CD4-positive, alpha-beta memory T cell (primary cell): ENCODE measurements at regions of chr3 and their contacts with region 1.

Region 1: GRCh38 chr3:184543843-184544512 is 17.6 kb upstream of the EPHB3 start:
- DNase-seq: peak; percentile 75 to 81 (median 78)
- H3K4me3 ChIP-seq: no peak overlapping the region
- H3K4me3 Mint-ChIP-seq: peak overlapping the region in 6 of 8 donors; percentile 40 to 64 (median 56)
- H3K27ac ChIP-seq: no peak overlapping the region
- H3K27ac Mint-ChIP-seq: peak overlapping the region in 1 of 7 donors; percentile 65
- H3K4me1 ChIP-seq: peaks cover 12% of the 10 kb centered on the region
- H3K4me1 Mint-ChIP-seq: peaks cover 9 to 13% (median 12%) of the 10 kb centered on the region in 4 donors
- H3K27me3 ChIP-seq: peaks cover 5% of the 10 kb centered on the region
- H3K27me3 Mint-ChIP-seq: peaks cover 11 to 23% of the 10 kb centered on the region in 2 donors

Region 2: GRCh38 chr3:183895296-183895695 is 648.7 kb before region 1 on chr3:
- CTCF ChIA-PET with region 1: interaction called, 4 read pairs
- POLR2A ChIA-PET with region 1: no interaction called
- intact Hi-C with region 1: loop called (anchors 1 kb)
- DNase-seq: peak; percentile 48 to 60 (median 57)
- H3K4me3 ChIP-seq: no peak overlapping the region
- H3K4me3 Mint-ChIP-seq: no peak overlapping the region
- H3K27ac ChIP-seq: no peak overlapping the region
- H3K27ac Mint-ChIP-seq: no peak overlapping the region
- H3K4me1 ChIP-seq: no peaks in the 10 kb centered on the region
- H3K4me1 Mint-ChIP-seq: peaks cover 0 to 3% (median 1%) of the 10 kb centered on the region in 4 donors
- H3K27me3 ChIP-seq: no peaks in the 10 kb centered on the region
- H3K27me3 Mint-ChIP-seq: peaks cover 17 to 37% of the 10 kb centered on the region in 2 donors

Region 3: GRCh38 chr3:184354121-184354728 is 189.8 kb before region 1 on chr3:
- CTCF ChIA-PET with region 1: interaction called, 21 read pairs
- POLR2A ChIA-PET with region 1: no interaction called
- intact Hi-C with region 1: loop called (anchors 1 kb)
- DNase-seq: peak in 4 of 5 donors; percentile 39 to 55 (median 43)
- H3K4me3 ChIP-seq: no peak overlapping the region
- H3K4me3 Mint-ChIP-seq: peak overlapping the region in 1 of 8 donors; percentile 15
- H3K27ac ChIP-seq: no peak overlapping the region
- H3K27ac Mint-ChIP-seq: no peak overlapping the region
- H3K4me1 ChIP-seq: peaks cover 10% of the 10 kb centered on the region
- H3K4me1 Mint-ChIP-seq: peaks cover 0 to 5% (median 0%) of the 10 kb centered on the region in 4 donors
- H3K27me3 ChIP-seq: no peaks in the 10 kb centered on the region
- H3K27me3 Mint-ChIP-seq: no peaks in the 10 kb centered on the region

Region 4: DNA sequence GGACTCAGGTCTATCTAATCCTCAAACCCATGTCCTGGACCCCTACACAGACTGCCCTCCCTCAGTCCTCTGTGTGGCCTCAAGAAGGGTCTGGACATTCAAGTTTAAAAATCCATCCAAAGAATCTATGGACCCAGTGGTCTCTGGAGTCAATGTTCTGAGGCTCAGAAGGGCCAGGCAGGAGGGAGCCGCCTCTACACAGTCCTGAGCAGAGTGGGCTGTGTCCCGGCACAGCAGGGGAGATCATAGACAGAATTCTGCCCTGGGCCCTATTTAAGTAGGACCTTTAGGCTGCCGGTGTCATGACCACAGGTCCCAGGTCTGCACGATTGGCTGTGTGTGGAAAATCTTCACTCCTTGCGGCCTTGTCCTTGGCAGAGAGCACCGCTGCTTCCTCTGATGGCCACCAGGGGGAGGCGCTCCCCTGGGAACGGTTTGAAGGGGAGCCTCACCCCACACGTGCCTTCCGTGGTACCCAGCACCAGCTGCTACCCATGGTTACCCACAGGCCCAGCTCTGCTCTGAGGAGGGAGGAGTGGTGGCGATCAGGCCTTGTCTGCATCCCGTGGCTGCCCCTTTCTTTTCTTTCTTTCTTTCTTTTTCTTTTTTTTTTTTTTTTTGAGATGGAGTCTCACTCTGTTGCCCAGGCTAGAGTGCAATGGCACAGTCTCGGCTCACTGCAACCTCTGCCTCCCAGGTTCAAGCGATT is 126.2 kb before region 1 on chr3:
- CTCF ChIA-PET with region 1: interaction called, 47 read pairs
- POLR2A ChIA-PET with region 1: interaction called, 4 read pairs
- intact Hi-C with region 1: loop called (anchors 1 kb)
- DNase-seq: peak; percentile 60 to 67 (median 61)
- H3K4me3 ChIP-seq: no peak overlapping the region
- H3K4me3 Mint-ChIP-seq: peak overlapping the region in 1 of 8 donors; percentile 20
- H3K27ac ChIP-seq: no peak overlapping the region
- H3K27ac Mint-ChIP-seq: no peak overlapping the region
- H3K4me1 ChIP-seq: no peaks in the 10 kb centered on the region
- H3K4me1 Mint-ChIP-seq: peaks cover 0 to 2% (median 0%) of the 10 kb centered on the region in 4 donors
- H3K27me3 ChIP-seq: no peaks in the 10 kb centered on the region
- H3K27me3 Mint-ChIP-seq: peaks cover 0 to under 1% of the 10 kb centered on the region in 2 donors

Region 5: DNA sequence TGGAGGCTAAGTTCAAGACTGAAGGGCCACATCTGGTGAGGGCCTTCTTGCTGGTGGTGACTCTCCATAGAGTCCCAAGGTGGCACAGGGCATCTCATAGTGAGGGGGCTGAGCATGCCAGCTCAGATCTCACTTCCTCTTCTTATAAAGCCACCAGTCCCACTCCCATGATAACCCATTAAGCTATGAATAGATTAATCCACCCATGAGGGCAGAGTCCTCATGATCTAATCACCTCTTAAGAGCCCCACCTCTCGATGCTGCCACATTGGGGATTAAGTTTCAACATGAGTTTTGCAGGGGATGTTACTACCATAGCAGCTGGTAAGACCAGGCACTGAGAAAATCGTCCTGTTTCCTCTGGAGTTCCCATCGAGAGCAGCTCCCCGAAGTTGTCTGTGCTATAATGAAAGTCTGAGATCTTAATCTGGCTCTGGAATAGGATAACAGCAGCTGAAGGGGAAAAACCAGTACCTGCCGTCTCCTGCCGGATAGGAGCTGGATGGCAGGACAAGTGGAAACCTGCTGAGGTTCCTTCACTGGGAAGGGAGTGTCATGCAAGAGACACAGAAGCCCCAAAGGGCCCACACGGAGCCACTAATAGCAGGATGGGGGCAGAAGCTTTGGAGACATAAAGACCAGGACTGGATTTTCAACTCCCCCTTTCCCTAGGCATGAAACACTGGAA is 61.9 kb before region 1 on chr3:
- CTCF ChIA-PET with region 1: no interaction called
- POLR2A ChIA-PET with region 1: no interaction called
- intact Hi-C with region 1: no loop called
- DNase-seq: no peak
- H3K4me3 ChIP-seq: no peak overlapping the region
- H3K4me3 Mint-ChIP-seq: no peak overlapping the region
- H3K27ac ChIP-seq: no peak overlapping the region
- H3K27ac Mint-ChIP-seq: no peak overlapping the region
- H3K4me1 ChIP-seq: no peaks in the 10 kb centered on the region
- H3K4me1 Mint-ChIP-seq: no peaks in the 10 kb centered on the region
- H3K27me3 ChIP-seq: no peaks in the 10 kb centered on the region
- H3K27me3 Mint-ChIP-seq: peaks cover 22 to 34% of the 10 kb centered on the region in 2 donors

Region 6: GRCh38 chr3:184523825-184524615 is 20.0 kb before region 1 on chr3:
- CTCF ChIA-PET with region 1: interaction called, 31 read pairs
- POLR2A ChIA-PET with region 1: no interaction called
- intact Hi-C with region 1: loop called (anchors 1 kb)
- DNase-seq: no peak
- H3K4me3 ChIP-seq: no peak overlapping the region
- H3K4me3 Mint-ChIP-seq: peak overlapping the region in 3 of 8 donors; percentile 12 to 79 (median 55)
- H3K27ac ChIP-seq: no peak overlapping the region
- H3K27ac Mint-ChIP-seq: no peak overlapping the region
- H3K4me1 ChIP-seq: peaks cover 15% of the 10 kb centered on the region
- H3K4me1 Mint-ChIP-seq: peaks cover 7 to 17% (median 9%) of the 10 kb centered on the region in 4 donors
- H3K27me3 ChIP-seq: peaks cover 16% of the 10 kb centered on the region
- H3K27me3 Mint-ChIP-seq: peaks cover 14 to 25% of the 10 kb centered on the region in 2 donors

Region 7: DNA sequence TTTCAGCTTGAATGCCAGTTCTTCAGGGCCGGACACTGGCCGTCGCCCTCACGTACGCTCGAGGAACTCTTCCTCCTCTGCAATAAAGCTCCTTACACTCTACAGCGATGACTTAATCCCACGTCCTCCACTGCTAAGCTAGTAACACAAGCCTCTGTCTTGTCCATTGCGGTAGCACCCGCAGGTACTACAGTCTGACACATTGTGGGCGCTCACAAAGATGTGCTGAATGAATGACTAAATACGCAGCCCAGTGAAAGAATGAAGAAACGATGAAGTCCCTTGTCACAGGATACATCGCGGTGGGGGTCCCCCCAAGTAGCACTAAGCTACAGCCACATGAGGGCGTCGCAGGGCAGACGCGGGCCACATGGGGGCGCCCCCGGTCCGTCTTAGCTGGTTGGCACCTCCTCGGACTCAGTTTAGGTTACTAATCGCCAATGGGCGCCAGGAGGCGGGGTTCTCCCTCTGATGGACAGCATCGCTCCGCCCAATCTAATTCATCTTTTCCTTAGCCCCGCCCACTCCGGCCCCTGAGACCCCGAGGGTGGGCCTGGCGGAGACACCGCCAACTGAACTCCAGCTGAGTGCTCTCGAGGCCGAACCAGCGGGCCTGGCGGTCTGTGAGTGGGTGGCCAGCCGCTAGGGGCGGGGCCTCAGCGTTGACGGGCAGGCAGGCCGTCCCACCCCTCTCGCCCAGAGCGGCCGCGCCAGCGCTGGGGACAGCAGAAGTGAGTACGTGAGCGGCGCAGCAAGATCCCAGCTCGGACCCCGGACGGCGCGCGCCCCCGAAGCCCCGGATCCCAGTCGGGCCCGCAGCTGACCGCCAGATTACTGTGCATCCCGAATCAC is 17.3 kb after region 1 on chr3 and contains the start of gene EPHB3:
- CTCF ChIA-PET with region 1: interaction called, 25 read pairs
- POLR2A ChIA-PET with region 1: interaction called, 3 read pairs
- intact Hi-C with region 1: no loop called
- DNase-seq: peak; percentile 87 to 90 (median 89)
- H3K4me3 ChIP-seq: peak within 1 kb of the TSS; percentile 9 to 68
- H3K4me3 Mint-ChIP-seq: peak within 1 kb of the TSS; percentile 77 to 91 (median 84)
- H3K27ac ChIP-seq: no peak within 1 kb of the TSS
- H3K27ac Mint-ChIP-seq: peak within 1 kb of the TSS; percentile 45 to 86 (median 75)
- H3K4me1 ChIP-seq: peaks cover 38% of the 10 kb centered on the region
- H3K4me1 Mint-ChIP-seq: peaks cover 24 to 61% (median 38%) of the 10 kb centered on the region in 4 donors
- H3K27me3 ChIP-seq: peaks cover 9% of the 10 kb centered on the region
- H3K27me3 Mint-ChIP-seq: peaks cover 12 to 17% of the 10 kb centered on the region in 2 donors
- total RNA-seq, gene EPHB3: 0.29 to 0.67 TPM